GM23248 (cell line): ENCODE measurements at regions of chr1 and their contacts with region 1.

Region 1: DNA sequence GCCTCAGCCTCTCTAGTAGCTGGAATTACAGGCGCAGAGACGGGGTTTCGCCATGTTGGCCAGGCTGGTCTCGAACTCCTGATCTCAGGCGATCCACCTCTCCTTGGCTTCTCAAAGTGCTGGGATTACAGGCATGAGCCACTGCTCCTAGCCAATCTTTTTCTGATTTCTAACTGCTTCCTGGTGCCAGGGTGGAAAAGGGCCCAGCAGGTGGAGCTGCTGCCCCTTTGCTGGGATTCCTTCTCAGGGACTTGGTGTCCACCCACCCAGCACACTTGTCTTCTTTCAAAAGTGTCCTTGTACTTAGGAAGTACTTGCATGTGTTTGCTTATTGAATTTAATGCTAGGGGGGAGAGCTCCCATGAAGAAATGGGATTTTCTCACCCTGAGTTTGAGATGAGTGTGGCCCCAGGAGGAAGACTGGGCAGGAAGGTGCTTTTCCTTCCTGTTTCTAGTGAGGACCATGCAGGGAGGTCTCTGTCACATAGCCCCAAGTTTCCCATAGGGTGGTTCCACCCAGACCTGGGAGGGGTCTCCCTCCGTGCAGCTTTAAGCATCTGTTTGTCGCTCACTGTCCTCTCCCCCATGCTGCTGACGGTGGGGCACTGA is 14.2 kb downstream of the UTP11 start:
- DNase-seq: peak; percentile 70
- H3K4me3 ChIP-seq: no peak overlapping the region
- H3K27ac ChIP-seq: no peak overlapping the region
- H3K4me1 ChIP-seq: peaks cover 28% of the 10 kb centered on the region
- H3K27me3 ChIP-seq: no peaks in the 10 kb centered on the region

Region 2: GRCh38 chr1:36567601-36568341 is 1458.9 kb before region 1 on chr1:
- in situ Hi-C with region 1: no loop called
- DNase-seq: no peak
- H3K4me3 ChIP-seq: no peak overlapping the region
- H3K27ac ChIP-seq: no peak overlapping the region
- H3K4me1 ChIP-seq: no peaks in the 10 kb centered on the region
- H3K27me3 ChIP-seq: 0 out of 2 replicates have a peak, but pooled peaks cover 3% of the 10 kb centered on the region

Region 3: GRCh38 chr1:37667023-37667761 is 359.5 kb before region 1 on chr1:
- in situ Hi-C with region 1: no loop called
- DNase-seq: peak; percentile 38
- H3K4me3 ChIP-seq: no peak overlapping the region
- H3K27ac ChIP-seq: no peak overlapping the region
- H3K4me1 ChIP-seq: no peaks in the 10 kb centered on the region
- H3K27me3 ChIP-seq: peaks cover 20% of the 10 kb centered on the region

Region 4: DNA sequence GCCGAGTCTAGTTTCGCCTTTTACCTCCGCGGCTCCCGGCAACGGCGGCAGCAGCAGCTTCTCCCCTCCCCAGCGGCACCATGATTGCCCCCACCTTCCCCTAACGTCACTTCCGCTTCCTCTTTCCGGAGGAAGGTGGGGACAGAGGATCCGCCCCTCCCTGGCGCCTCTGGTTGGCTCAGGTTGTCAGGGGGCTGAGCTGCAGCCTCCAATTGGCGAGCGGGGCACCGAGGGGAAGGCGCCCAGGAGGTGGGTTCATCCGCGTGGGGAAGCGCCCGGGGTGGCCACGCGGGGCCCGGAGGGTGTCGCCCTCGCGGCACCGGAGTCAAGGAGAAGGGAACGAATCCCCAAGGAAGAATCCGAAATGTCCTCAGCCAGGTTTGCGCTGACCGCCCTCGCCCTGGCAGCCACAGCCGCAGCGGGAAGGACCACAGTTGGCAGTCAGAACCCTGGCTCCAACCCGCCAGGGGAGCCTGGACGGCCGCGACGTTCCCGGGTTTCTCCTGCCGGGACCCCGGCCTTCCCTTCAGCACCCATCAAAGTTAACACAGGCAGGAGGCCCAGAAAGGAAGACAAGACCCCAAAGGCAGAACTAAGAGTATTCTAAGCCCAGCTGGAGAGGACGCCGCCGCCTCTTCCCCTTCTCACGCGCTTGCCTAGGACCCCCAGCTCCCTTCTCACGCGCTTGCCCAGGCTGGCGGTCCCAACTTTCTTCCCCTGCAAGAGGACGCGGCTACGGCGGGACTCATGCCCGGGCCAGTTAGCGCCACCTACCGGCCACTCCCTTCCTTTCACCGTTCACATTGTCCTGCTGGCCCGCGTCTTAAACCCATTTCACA is 167.0 kb before region 1 on chr1 and contains the start of gene MTF1:
- in situ Hi-C with region 1: no loop called
- DNase-seq: peak; percentile 99
- H3K4me3 ChIP-seq: peak within 1 kb of the TSS; percentile 97
- H3K27ac ChIP-seq: peak within 1 kb of the TSS; percentile 90
- H3K4me1 ChIP-seq: peaks cover 13% of the 10 kb centered on the region
- H3K27me3 ChIP-seq: no peaks in the 10 kb centered on the region
- total RNA-seq, gene MTF1: 2.1 TPM in 2 replicates

Region 5: DNA sequence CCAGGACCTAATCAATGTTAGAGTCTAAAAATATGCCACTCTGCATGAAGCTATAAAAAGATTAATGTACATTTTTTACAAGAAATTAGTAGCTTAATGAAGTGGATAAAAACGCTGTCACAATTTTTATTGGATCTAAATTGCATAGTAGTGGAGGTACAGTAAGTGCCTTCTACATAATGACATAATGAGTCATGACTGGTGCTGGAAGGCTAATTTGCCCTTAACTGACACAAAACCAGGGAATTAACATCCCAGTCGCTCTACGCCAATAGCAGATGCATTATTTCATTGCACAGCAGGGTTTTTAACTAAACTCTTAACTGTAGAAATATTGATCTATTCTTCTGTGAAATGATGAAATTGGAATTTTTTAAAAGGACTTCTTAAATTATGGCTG is 799.6 kb after region 1 on chr1:
- in situ Hi-C with region 1: loop called (anchors 10 kb)
- DNase-seq: no peak
- H3K4me3 ChIP-seq: no peak overlapping the region
- H3K27ac ChIP-seq: no peak overlapping the region
- H3K4me1 ChIP-seq: no peaks in the 10 kb centered on the region
- H3K27me3 ChIP-seq: peaks cover 50% of the 10 kb centered on the region

Region 6: GRCh38 chr1:39672551-39672947 is 1645.9 kb after region 1 on chr1:
- in situ Hi-C with region 1: no loop called
- DNase-seq: peak; percentile 18
- H3K4me3 ChIP-seq: peak overlapping the region; percentile 68; the same call in 1 of the 2 replicates
- H3K27ac ChIP-seq: no peak overlapping the region
- H3K4me1 ChIP-seq: no peaks in the 10 kb centered on the region
- H3K27me3 ChIP-seq: peaks cover 43% of the 10 kb centered on the region